H1 (cell line): ENCODE measurements at regions of chr12 and their contacts with region 1.

Region 1: DNA sequence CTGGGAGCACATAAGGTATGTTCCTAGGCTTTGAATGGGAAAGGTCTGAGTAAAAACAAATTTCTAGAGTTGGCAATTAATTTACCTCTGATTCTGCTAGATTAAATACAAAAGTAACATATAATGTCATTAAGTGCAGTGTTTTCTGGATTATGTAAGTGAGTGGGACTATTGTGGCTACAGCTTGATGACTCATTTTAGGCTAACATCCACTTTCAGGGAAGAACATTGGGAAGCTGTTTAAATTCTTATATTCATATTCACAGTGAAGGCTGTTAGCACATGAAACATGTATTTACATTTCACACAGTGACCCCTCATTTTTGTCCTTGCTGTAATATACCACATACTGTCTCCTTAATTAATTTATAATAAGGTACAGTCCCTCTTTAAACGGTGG is 13.2 kb upstream of the BMAL2 start:
- DNase-seq: no peak
- H3K4me3 ChIP-seq: no peak overlapping the region
- H3K27ac ChIP-seq: no peak overlapping the region
- H3K4me1 ChIP-seq: peaks cover 0 to 5% (median 4%) of the 10 kb centered on the region in 4 experiments; a peak in 5 of 7 replicates
- H3K27me3 ChIP-seq: no peaks in the 10 kb centered on the region
- CTCF ChIP-seq: no peak
- EP300 ChIP-seq: no peak
- POLR2A ChIP-seq: no peak
- RAD21 ChIP-seq: no peak

Region 2: DNA sequence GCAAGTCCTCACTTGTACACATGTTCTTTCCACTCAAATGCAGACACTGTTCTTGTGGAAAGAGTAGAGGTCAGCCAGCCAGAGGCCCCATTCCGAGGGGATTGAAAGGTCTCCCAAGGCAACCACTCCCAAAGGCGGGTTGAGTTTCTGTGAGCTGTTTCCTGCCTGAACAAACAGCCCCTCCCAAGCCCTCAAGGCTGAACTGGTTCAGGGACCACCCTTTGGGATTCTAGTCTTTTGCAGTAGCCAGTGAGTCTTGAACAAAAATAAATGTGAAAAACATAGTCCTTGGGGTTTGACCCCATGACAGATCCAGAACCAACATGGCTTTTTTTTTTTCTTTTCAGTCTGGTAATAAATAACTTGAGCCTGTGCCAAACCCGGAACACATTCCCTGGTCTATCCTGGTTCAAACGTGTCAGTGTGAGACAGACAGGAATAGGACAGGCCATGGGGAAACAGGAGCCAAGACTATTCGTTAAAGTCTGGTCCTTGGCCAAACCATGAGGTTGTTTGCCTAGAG is 92.9 kb before region 1 on chr12:
- CTCF ChIA-PET with region 1: no interaction called
- POLR2A ChIA-PET with region 1: no interaction called
- DNase-seq: no peak
- H3K4me3 ChIP-seq: no peak overlapping the region
- H3K27ac ChIP-seq: no peak overlapping the region
- H3K4me1 ChIP-seq: no peaks in the 10 kb centered on the region
- H3K27me3 ChIP-seq: peaks cover 0 to 1% (median 0%) of the 10 kb centered on the region in 4 experiments; a peak in 1 of 7 replicates
- CTCF ChIP-seq: no peak
- EP300 ChIP-seq: no peak
- POLR2A ChIP-seq: no peak
- RAD21 ChIP-seq: no peak

Region 3: GRCh38 chr12:27332407-27333301 is 13.2 kb after region 1 on chr12 and contains the start of gene BMAL2:
- CTCF ChIA-PET with region 1: interaction called, 3 read pairs
- POLR2A ChIA-PET with region 1: interaction called, 11 read pairs
- DNase-seq: peak in 1 of 2 experiments; percentile 80
- H3K4me3 ChIP-seq: peak within 1 kb of the TSS; percentile 68 to 80 (median 71)
- H3K27ac ChIP-seq: peak within 1 kb of the TSS; percentile 24; the same call in 1 of the 2 replicates
- H3K4me1 ChIP-seq: peaks cover 0 to 8% (median 2%) of the 10 kb centered on the region in 4 experiments; a peak in 5 of 7 replicates
- H3K27me3 ChIP-seq: peaks cover 3 to 14% (median 7%) of the 10 kb centered on the region in 4 experiments
- CTCF ChIP-seq: no peak
- EP300 ChIP-seq: no peak
- POLR2A ChIP-seq: peak in 1 of 2 experiments; percentile 68; a peak in 1 of 3 replicates
- RAD21 ChIP-seq: no peak
- total RNA-seq, gene BMAL2: 20.6 and 22.8 TPM in 2 replicates